AG04450 (cell line): ENCODE measurements at regions of chrX and their contacts with region 1.

Region 1: DNA sequence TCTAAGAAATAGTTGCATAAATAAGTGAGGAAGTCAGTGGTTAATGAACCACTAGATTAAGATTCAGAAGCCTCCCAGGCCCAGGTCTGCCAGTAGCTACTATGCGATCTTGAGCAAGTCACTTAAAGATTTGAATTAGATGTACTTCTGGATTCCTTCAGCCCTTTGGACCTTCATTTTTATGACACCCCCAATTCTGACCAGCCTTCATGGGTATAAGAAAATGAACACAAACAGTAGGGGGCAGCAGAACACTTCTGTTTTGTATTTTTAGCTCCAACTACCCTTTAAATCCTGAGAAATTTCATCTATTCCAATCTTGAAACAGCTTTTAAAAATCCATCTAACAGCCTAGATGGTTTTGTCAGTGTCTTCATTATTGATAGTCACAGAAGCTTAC is 19.0 kb downstream of the TMEM47 start:
- DNase-seq: peak; percentile 6
- H3K4me3 ChIP-seq: no peak overlapping the region
- H3K27ac ChIP-seq: no peak overlapping the region
- H3K27me3 ChIP-seq: no peaks in the 10 kb centered on the region
- CTCF ChIP-seq: peak; percentile 54

Region 2: GRCh38 chrX:34467437-34467836 is 170.7 kb before region 1 on chrX:
- CTCF ChIA-PET with region 1: no interaction called
- POLR2A ChIA-PET with region 1: no interaction called
- DNase-seq: no peak
- H3K4me3 ChIP-seq: no peak overlapping the region
- H3K27ac ChIP-seq: no peak overlapping the region
- H3K27me3 ChIP-seq: no peaks in the 10 kb centered on the region
- CTCF ChIP-seq: no peak

Region 3: DNA sequence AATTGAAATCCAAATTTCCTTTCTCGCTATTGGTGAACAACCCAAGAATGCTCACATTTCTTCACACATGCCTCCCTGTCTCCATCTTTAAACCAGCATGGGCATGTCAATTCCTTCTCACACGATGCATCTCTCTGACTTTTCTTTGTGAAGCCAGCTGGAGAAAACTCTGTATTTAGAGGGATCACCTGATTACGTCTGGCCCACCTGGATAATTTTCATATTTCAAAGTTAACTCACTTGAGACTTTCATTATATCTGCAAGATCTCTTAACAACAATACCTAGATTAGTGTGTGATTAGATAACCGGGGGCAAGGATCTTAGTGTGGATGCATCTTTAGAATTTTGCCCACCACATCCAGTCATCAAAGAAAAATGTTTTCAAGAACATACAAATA is 145.0 kb before region 1 on chrX:
- CTCF ChIA-PET with region 1: no interaction called
- POLR2A ChIA-PET with region 1: no interaction called
- DNase-seq: no peak
- H3K4me3 ChIP-seq: no peak overlapping the region
- H3K27ac ChIP-seq: no peak overlapping the region
- H3K27me3 ChIP-seq: no peaks in the 10 kb centered on the region
- CTCF ChIP-seq: no peak

Region 4: GRCh38 chrX:34918856-34919255 is 280.7 kb after region 1 on chrX:
- CTCF ChIA-PET with region 1: interaction called, 30 read pairs
- POLR2A ChIA-PET with region 1: no interaction called
- DNase-seq: peak; percentile 30
- H3K4me3 ChIP-seq: no peak overlapping the region
- H3K27ac ChIP-seq: no peak overlapping the region
- H3K27me3 ChIP-seq: no peaks in the 10 kb centered on the region
- CTCF ChIP-seq: peak; percentile 61